ENCODE measurements at regions of chr1 and their contacts with region 1.

Region 1: GRCh38 chr1:21334214-21335087 is 44.2 kb upstream of the ECE1 start:
- DNase-seq: peak; percentile 88
- H3K4me3 ChIP-seq: peak overlapping the region; percentile 64
- H3K27ac ChIP-seq: peak overlapping the region; percentile 69
- H3K4me1 ChIP-seq: peaks cover 58% of the 10 kb centered on the region
- CTCF ChIP-seq: peak; percentile 82

Region 2: GRCh38 chr1:21255278-21255942 is 79.0 kb before region 1 on chr1:
- CTCF ChIA-PET with region 1: no interaction called
- POLR2A ChIA-PET with region 1: no interaction called
- intact Hi-C with region 1: loop called (anchors 1 kb)
- DNase-seq: peak; percentile 87
- H3K4me3 ChIP-seq: no peak overlapping the region
- H3K27ac ChIP-seq: no peak overlapping the region
- H3K4me1 ChIP-seq: peaks cover 5% of the 10 kb centered on the region
- CTCF ChIP-seq: peak; percentile 94

Measured in OCI-LY7 (cell line).